ENCODE measurements at regions of chr5 and their contacts with region 1.

Region 1: DNA sequence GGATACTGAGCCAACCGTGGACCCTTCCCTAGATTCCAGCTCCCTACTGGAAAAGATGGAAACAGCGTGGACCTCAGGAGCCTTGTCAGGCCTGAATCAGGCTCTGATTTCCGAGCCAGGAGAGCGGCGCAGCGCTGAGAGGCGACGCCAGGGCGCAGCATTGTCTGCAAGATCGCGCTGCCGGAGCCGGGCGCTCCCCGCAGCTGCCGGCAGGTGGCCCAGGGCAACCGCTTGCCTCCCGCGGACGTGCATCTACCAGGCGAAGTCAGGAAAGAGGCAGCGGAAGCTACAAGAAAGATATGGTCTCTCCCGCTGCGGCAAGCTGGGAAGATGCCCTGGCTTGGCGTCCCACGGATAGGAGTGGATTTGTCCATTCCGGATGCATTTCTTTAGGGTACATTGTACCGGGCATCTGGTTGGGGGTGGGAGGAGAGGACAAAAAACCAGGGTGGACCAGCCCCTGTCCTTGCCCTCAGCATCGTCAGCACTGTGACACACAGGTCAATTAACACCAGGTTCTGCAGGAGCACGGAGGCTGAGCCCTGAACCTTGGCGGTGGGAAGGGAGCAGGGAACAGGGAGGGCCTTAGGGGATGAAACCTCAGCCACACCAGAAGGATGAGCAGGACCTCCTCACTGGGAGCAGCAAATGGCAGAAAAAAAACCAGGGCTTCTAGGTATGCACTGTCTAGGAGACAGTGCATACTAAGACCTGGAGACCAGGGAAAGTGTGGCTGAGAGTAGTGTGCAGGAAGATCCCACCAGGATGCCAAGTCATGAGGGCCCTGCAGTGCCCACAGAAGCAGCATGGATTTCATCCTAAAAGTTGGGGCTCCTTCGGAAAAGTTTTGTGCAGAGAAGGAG is 55.9 kb downstream of the SFXN1 start:
- H3K4me3 ChIP-seq: no peak overlapping the region; the same call in 1 of the 2 replicates
- H3K27ac ChIP-seq: no peak overlapping the region
- H3K4me1 ChIP-seq: no peaks in the 10 kb centered on the region
- CTCF ChIP-seq: peak; percentile 99

Region 2: DNA sequence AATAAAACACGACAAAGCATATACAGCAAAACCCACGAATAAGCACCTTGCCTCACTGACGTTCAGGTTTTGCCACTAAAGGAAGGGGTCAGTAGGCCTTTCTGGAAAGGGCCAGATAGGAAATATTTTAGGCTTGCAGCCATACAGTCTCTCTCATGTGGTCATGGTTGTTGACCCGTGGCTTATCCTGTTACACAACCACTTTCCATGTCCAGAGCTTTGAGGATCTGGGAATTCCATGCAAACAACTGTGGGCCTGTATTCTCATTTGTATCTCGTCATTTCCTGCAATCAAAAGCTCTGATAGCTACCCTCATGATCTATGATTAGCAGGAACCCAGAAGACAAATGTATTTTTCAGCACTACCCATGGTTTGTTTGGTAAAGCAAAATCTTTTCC is 198.6 kb before region 1 on chr5:
- CTCF ChIA-PET with region 1: no interaction called
- POLR2A ChIA-PET with region 1: no interaction called
- H3K4me3 ChIP-seq: no peak overlapping the region
- H3K27ac ChIP-seq: no peak overlapping the region
- H3K4me1 ChIP-seq: no peaks in the 10 kb centered on the region
- CTCF ChIP-seq: no peak

Region 3: DNA sequence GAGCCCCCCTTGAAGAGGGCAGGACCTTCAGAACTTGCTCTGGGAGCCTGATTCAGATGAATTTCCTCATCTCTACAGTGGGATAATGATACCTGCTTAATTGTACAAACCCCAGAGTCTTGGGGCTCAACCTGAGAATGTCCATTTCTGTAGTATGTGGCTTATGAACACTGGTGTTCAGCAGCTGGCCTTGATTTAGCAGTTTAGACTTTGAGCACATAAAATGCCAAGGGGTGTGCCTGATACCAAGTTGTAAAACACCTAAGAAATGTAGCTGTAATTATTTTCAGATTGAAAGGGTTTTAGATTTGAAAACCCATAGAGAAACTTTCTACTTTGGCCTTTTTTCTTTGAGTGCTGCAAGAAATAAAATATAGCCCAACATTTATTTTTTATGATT is 11.0 kb before region 1 on chr5:
- CTCF ChIA-PET with region 1: interaction called, 21 read pairs
- POLR2A ChIA-PET with region 1: no interaction called
- H3K4me3 ChIP-seq: no peak overlapping the region
- H3K27ac ChIP-seq: no peak overlapping the region
- H3K4me1 ChIP-seq: no peaks in the 10 kb centered on the region
- CTCF ChIP-seq: no peak

Region 4: DNA sequence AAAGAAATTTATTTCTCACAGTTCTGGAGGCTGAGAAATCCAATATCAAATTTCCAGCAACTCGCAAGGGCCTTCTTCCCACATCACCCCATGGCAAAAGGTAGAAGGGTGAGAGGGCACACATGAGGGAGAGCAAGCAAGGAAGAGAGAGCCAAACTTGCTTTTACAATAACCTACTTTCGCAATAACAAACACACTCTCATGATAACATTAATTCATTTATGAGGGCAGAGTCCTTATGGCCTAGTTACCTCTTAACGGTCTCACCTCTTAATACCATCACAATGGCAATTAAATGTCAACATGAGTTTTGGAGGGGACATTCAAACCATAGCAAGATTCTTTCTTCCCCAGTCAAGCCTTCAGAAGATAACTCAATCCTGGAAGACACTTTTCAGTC is 112.0 kb after region 1 on chr5:
- CTCF ChIA-PET with region 1: interaction called, 13 read pairs
- POLR2A ChIA-PET with region 1: no interaction called
- H3K4me3 ChIP-seq: no peak overlapping the region
- H3K27ac ChIP-seq: no peak overlapping the region
- H3K4me1 ChIP-seq: no peaks in the 10 kb centered on the region
- CTCF ChIP-seq: no peak

Region 5: DNA sequence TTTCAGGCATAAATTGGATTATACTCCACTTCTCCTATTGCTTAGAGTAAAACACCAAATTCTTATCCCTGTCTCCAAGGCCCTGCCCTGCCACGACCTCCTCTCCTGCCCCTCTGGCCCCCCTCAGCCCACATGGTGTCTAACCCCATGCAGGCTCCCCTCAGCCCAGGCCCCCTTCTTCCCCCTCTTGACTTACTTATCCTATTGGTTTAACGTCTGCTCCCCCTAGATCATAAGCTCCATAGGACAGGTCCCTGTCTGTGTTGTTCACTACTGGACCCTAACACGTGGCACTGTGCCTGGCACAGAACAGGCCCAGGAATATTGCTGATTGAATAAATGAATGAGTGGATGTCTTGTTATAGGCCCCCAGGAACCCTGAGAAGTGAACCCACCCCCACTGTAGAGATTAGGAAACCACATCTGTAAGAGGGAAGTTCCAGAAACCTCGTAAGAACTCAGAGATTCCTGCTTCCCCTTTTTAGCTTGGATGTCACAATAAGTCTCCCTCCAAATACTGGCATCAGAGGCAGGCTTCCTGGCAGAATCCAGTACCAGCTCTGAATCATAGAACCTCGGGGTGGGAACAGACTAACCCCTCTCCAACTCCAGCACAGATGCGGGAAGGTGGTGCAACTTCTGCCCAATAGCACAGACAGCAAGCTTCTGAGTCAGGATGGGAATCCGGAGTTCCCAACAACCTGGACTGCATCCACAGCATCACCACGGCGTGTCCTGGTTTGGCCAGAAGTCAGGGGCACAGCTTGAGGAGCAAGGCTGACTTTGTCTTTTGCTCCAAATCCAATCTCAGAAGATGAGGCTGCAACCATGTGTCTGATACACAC is 155.1 kb after region 1 on chr5:
- CTCF ChIA-PET with region 1: interaction called, 10 read pairs
- POLR2A ChIA-PET with region 1: no interaction called
- H3K4me3 ChIP-seq: no peak overlapping the region
- H3K27ac ChIP-seq: no peak overlapping the region
- H3K4me1 ChIP-seq: no peaks in the 10 kb centered on the region
- CTCF ChIP-seq: no peak

Region 6: GRCh38 chr5:175709276-175709781 is 175.0 kb after region 1 on chr5:
- CTCF ChIA-PET with region 1: interaction called, 16 read pairs
- POLR2A ChIA-PET with region 1: no interaction called
- H3K4me3 ChIP-seq: no peak overlapping the region
- H3K27ac ChIP-seq: no peak overlapping the region
- H3K4me1 ChIP-seq: no peaks in the 10 kb centered on the region
- CTCF ChIP-seq: no peak

Region 7: GRCh38 chr5:175729829-175730277 is 195.6 kb after region 1 on chr5:
- CTCF ChIA-PET with region 1: interaction called, 43 read pairs
- POLR2A ChIA-PET with region 1: no interaction called
- H3K4me3 ChIP-seq: no peak overlapping the region
- H3K27ac ChIP-seq: no peak overlapping the region
- H3K4me1 ChIP-seq: no peaks in the 10 kb centered on the region
- CTCF ChIP-seq: peak; percentile 98